ENCODE measurements at regions of chr2 and their contacts with region 1.

Region 1: GRCh38 chr2:182980115-182980514 is 58.1 kb downstream of the NCKAP1 start:
- DNase-seq: no peak
- H3K4me3 Mint-ChIP-seq: no peak overlapping the region
- H3K27ac Mint-ChIP-seq: no peak overlapping the region
- H3K4me1 Mint-ChIP-seq: peaks cover 2% of the 10 kb centered on the region
- H3K27me3 Mint-ChIP-seq: no peaks in the 10 kb centered on the region

Region 2: GRCh38 chr2:182186132-182186735 is 793.9 kb before region 1 on chr2:
- intact Hi-C with region 1: loop called (anchors 5 kb)
- DNase-seq: no peak
- H3K4me3 Mint-ChIP-seq: no peak overlapping the region
- H3K27ac Mint-ChIP-seq: no peak overlapping the region
- H3K4me1 Mint-ChIP-seq: no peaks in the 10 kb centered on the region
- H3K27me3 Mint-ChIP-seq: no peaks in the 10 kb centered on the region

Region 3: GRCh38 chr2:182650704-182651103 is 329.4 kb before region 1 on chr2:
- intact Hi-C with region 1: no loop called
- DNase-seq: no peak
- H3K4me3 Mint-ChIP-seq: no peak overlapping the region
- H3K27ac Mint-ChIP-seq: no peak overlapping the region
- H3K4me1 Mint-ChIP-seq: peaks cover 15% of the 10 kb centered on the region
- H3K27me3 Mint-ChIP-seq: peaks cover 2% of the 10 kb centered on the region

Region 4: GRCh38 chr2:182666674-182667314 is 313.3 kb before region 1 on chr2:
- intact Hi-C with region 1: loop called (anchors 1 kb)
- DNase-seq: no peak
- H3K4me3 Mint-ChIP-seq: no peak overlapping the region
- H3K27ac Mint-ChIP-seq: no peak overlapping the region
- H3K4me1 Mint-ChIP-seq: peaks cover 6% of the 10 kb centered on the region
- H3K27me3 Mint-ChIP-seq: peaks cover 13% of the 10 kb centered on the region

Region 5: DNA sequence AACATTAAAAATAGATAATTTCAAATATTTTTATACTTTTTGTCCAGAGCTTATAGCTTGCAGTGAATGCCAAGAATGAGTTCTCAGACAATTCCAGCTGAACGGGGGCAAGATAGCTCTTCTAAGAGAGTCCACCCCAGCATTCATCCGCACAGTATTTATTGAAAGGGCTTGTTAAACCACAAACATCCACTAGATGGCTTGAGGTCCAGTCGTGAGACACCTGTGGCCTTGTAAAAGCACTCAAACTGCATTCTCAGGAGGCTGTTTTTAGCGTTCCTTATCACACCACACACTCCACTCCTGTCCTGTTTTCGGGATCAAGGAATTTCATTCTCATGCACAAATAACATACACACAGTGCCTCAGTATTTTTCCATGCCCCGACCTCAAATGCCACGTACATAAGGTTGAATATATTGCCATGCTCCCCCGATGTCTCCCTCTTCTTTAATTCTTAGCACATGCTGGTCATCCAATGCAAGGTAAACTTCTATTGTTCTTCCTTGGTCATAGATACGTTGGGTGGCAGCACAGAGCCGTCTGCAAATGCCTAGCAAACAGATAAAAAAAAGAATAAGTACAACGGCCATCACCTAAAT is 216.7 kb before region 1 on chr2:
- intact Hi-C with region 1: loop called (anchors 5 kb)
- DNase-seq: no peak
- H3K4me3 Mint-ChIP-seq: no peak overlapping the region
- H3K27ac Mint-ChIP-seq: no peak overlapping the region
- H3K4me1 Mint-ChIP-seq: peaks cover 9% of the 10 kb centered on the region
- H3K27me3 Mint-ChIP-seq: no peaks in the 10 kb centered on the region

Region 6: GRCh38 chr2:182784777-182785176 is 195.3 kb before region 1 on chr2:
- intact Hi-C with region 1: loop called (anchors 1 kb)
- DNase-seq: no peak
- H3K4me3 Mint-ChIP-seq: no peak overlapping the region
- H3K27ac Mint-ChIP-seq: no peak overlapping the region
- H3K4me1 Mint-ChIP-seq: no peaks in the 10 kb centered on the region
- H3K27me3 Mint-ChIP-seq: no peaks in the 10 kb centered on the region

Region 7: DNA sequence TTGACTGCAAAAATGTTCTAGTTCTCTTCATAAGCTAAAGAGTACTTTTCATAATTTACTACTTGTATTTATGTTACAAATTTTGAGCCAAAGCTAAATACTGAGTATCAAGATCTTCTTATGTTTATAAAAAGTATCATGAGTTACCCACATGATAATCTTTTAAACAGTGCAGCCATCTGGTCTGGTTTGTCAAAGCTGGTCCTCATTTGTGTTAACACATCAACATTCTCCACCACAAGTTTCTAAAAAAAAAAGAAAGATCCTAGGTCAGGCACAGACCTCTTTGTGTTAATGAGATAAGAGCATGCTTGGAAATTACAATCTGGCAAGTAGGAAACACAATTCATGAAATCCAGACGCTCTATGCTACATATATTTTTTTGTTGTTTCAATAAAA is 38.2 kb before region 1 on chr2:
- intact Hi-C with region 1: loop called (anchors 5 kb)
- DNase-seq: no peak
- H3K4me3 Mint-ChIP-seq: no peak overlapping the region
- H3K27ac Mint-ChIP-seq: no peak overlapping the region
- H3K4me1 Mint-ChIP-seq: no peaks in the 10 kb centered on the region
- H3K27me3 Mint-ChIP-seq: no peaks in the 10 kb centered on the region